Activated T-helper 1 cell treated with anti-CD3 and anti-CD28 coated beads, Interleukin-12 subunit alpha, Interleukin-12 subunit beta, Interleukin-2, Interleukin-4 antibody, amounts not matched to agents 30 ng/mL and 10 ng/mL and 1 ng/mL, durations not matched to agents 14 hours and 24 hours and 36 hours (primary cell): ENCODE measurements at regions of chr21 and their contacts with region 1.

Region 1: DNA sequence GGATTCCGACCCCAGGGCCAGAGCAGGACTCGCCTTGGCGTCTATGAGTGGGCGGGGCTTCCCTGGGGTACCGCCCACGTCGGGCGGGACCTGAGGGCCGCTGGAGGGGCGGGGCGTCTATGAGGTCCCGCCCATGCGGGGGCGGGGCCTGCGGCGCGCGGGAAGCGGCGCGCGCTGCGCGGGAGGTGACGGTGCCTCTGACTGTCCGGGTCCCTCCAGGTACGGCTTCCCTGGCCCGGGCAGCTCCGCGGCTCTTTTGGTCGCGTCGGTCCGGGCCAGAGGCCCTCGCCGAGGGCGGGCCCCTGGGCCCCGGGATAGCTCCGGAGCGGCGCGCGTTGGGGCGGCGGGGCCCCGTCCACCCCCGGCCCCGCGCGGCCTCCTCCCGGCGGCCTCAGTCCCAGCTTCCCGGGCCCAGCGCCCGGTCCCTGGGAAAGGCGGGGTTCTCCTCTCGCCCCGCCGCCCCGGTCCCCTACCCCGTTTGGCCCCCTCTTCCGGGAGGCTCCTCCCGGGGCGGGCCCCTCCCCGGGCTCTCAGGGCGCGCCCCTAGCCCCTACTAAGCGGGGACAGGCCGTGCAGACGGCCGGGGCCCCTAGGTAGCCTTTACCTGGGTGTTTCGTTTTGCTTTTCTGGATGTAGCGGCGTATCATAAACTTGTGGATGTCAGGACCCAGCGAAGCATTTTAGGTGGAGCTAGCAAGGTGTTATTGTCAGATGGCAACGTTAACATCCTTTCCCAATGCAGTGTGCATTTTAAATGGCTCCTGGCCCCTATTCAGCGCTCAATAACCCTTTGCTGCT is at the start of gene CHAF1B:
- DNase-seq: peak; percentile 80
- H3K4me3 Mint-ChIP-seq: peak within 1 kb of the TSS; percentile 89
- H3K27ac Mint-ChIP-seq: peak within 1 kb of the TSS; percentile 65
- H3K4me1 Mint-ChIP-seq: peaks cover 25% of the 10 kb centered on the region
- H3K27me3 Mint-ChIP-seq: no peaks in the 10 kb centered on the region
- total RNA-seq, gene CHAF1B: 33.8 and 35.7 TPM in 2 replicates

Region 2: GRCh38 chr21:34614633-34615486 is 1770.6 kb before region 1 on chr21 and contains the start of gene RCAN1:
- intact Hi-C with region 1: loop called (anchors 10 kb)
- DNase-seq: peak; percentile 86
- H3K4me3 Mint-ChIP-seq: peak within 1 kb of the TSS; percentile 85
- H3K27ac Mint-ChIP-seq: peak within 1 kb of the TSS; percentile 57
- H3K4me1 Mint-ChIP-seq: peaks cover 30% of the 10 kb centered on the region
- H3K27me3 Mint-ChIP-seq: peaks cover 5% of the 10 kb centered on the region
- total RNA-seq, gene RCAN1: 10.7 and 11.1 TPM in 2 replicates

Region 3: DNA sequence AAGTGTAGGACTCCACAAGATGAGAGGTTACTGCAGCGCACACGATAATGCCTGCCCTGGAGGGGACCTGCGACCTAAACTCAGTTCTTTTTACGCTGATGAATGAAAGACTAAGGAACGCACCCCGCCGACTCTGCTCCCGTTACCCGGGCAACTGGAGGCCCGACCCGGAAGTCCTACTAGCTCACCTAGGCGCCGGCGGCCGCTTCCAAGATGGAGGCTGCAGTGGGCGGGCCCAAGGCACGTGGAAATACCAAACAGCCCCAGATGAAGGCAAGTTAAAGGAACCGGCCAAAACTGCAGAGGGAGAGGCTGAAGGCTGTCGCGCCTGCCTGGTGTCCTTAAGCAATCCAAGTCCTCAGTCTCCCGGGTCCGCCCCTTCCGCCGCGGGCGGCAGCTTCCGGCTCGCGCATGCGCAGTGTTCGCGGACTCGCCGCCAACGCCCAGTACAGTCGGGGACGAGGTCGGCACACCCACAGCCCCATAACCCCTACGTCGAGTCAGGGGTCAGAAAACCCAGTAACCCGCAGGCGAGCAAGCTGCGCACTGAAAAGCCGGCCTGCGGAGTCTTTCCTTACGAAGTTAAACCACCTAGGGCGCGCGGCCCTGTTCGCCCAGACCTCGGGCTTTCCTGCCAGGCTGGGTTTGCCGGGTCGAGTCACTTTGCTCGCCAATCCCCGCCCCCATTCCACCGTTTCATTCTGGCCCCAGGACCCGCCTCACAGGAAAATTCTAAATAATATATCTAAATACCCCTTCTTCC is 325.1 kb before region 1 on chr21 and contains the start of gene SETD4:
- intact Hi-C with region 1: loop called (anchors 1 kb)
- DNase-seq: peak; percentile 91
- H3K4me3 Mint-ChIP-seq: peak within 1 kb of the TSS; percentile 93
- H3K27ac Mint-ChIP-seq: peak within 1 kb of the TSS; percentile 98
- H3K4me1 Mint-ChIP-seq: peaks cover 23% of the 10 kb centered on the region
- H3K27me3 Mint-ChIP-seq: peaks cover 3% of the 10 kb centered on the region
- total RNA-seq, gene SETD4: 21.9 and 22.0 TPM in 2 replicates

Region 4: DNA sequence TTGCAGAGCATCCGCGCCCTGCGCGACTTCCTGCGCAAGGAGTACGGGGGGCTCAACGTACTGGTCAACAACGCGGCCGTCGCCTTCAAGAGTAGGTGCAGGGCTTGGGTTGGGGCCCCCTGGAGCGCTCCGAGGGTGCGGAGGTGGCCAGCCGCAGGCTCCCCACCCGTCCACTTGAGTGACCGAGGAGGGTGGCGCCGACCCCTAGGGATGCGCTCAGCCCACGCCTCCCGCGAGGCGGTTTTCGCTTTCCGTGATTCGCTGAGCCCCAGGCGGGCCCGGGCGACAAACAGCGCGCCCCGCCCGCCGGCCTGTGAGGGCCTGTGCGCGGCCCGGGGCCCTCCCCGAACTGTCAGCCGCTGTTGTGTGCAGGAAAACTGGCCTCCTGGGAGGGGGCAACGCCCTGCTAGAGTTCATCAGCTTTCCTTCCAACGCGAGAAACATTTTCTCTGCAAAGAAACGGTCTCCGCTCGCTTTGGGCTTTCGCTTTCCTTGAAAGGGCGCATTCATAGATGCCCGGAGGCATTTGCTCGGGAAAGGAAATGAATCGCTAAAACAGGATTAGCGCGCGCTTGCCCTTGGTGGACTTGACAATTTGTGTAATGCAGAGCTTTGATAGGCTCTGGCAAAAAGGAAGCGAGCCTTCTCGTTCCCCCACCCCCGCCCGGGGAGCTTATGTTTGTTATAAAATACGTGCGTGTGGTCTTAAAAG is 249.9 kb before region 1 on chr21:
- intact Hi-C with region 1: loop called (anchors 2 kb)
- DNase-seq: peak; percentile 68
- H3K4me3 Mint-ChIP-seq: peak overlapping the region; percentile 94
- H3K27ac Mint-ChIP-seq: peak overlapping the region; percentile 94
- H3K4me1 Mint-ChIP-seq: peaks cover 22% of the 10 kb centered on the region
- H3K27me3 Mint-ChIP-seq: peaks cover 5% of the 10 kb centered on the region

Region 5: DNA sequence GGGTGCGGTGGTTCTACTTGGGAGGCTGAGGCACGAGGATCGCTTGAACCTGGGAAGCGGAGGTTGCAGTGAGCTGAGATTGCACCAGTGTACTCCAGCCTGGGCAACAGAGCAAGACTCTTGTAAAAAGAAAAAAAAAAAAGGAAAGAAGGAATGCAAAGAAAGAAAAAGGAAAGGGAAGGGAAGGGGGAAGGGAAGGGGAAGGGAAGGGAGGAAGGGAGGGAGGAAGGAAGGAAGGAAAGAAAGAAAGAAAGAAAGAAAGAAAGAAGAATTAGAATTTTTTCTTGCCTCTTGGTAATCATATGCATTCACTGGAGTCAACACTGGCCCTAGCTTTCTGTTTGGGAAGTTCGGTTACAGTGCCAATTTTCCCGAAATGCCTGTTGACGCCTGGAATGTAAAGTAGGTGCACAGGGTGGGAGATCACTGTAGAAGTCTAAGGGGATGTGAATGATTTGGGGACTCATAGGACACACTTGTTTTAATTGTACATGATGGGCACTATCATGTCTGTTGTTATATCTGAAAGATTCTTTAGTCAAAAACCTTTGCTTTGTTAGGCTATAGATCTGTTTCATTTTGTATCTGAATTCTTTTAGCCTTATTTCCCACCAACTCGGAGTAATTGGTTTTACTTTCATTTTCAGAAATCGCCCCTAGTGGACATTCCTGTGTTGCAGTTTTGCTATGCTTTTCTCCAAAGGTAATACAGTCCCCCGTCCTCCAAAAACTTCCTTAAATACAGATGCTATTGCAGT is 125.2 kb before region 1 on chr21:
- intact Hi-C with region 1: no loop called
- DNase-seq: peak; percentile 31
- H3K4me3 Mint-ChIP-seq: peak overlapping the region; percentile 70
- H3K27ac Mint-ChIP-seq: peak overlapping the region; percentile 53
- H3K4me1 Mint-ChIP-seq: peaks cover 19% of the 10 kb centered on the region
- H3K27me3 Mint-ChIP-seq: no peaks in the 10 kb centered on the region

Region 6: DNA sequence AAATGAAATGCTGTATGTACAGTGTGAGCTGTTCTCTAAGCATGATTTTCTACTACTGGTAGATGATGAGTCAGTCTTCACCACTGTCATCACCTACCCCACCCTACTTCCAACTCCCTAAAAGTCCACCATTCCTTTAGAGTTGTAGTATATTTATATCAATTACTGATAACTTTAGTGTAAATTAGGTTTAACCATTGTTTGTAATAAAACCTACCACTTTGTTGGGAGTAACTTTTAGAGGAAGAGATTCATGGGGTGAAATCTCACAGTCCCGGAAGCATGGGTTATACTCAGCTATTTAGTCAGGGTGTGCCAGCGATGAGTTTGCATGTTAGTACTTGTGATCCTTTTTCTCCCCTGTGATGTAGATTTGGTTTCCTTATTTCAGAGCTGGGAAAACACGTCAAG is 48.3 kb before region 1 on chr21:
- intact Hi-C with region 1: no loop called
- DNase-seq: no peak
- H3K4me3 Mint-ChIP-seq: no peak overlapping the region
- H3K27ac Mint-ChIP-seq: no peak overlapping the region
- H3K4me1 Mint-ChIP-seq: peaks cover 10% of the 10 kb centered on the region
- H3K27me3 Mint-ChIP-seq: no peaks in the 10 kb centered on the region

Region 7: GRCh38 chr21:37257967-37258877 is 872.8 kb after region 1 on chr21:
- intact Hi-C with region 1: loop called (anchors 5 kb)
- DNase-seq: peak; percentile 83
- H3K4me3 Mint-ChIP-seq: peak overlapping the region; percentile 95
- H3K27ac Mint-ChIP-seq: peak overlapping the region; percentile 100
- H3K4me1 Mint-ChIP-seq: peaks cover 56% of the 10 kb centered on the region
- H3K27me3 Mint-ChIP-seq: peaks cover 2% of the 10 kb centered on the region